ENCODE measurements at regions of chr17 and their contacts with region 1.

Region 1: GRCh38 chr17:76623271-76624146 is 20.0 kb downstream of the ST6GALNAC1 start:
- DNase-seq: peak; percentile 87
- CTCF ChIP-seq: peak; percentile 98

Region 2: DNA sequence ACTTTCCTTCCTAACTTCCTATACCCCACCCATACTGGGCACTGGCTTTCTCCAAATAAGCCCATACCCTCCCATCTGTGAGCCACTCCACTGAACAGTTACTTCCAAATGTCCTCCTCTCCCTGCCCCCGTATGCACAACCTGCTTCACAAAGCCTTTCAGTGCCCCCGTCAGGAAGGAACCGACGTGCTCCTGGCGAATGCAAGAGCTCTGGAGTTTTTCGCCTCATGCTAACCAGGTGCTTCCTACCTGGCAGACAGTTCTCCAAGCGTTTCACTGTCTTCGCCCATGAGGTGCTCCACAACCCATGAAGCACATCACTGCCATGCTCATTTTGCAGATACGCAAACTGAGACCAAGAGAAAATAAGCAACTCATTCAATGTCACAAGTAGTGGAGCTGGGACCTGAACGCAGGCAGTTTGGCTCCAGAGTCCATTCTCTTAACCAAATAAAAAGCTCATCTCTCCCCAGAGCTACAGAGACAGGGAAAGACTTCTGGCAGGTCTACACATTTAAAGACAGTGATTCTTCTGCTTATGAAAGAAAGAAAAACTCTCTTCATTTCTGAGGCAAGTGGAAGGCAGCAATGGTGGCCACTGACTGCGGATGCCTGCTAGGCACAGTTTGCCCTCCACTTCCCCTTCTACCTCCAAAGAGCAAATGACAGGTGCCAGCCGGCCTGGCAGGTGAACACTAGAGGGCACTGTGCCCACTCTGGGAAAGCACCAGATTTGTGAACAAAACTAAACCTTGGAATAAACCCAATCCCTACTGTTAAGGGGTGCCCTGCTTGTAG is 215.3 kb before region 1 on chr17:
- in situ Hi-C with region 1: no loop called
- DNase-seq: peak; percentile 82
- CTCF ChIP-seq: peak; percentile 93

Region 3: GRCh38 chr17:76523084-76524037 is 100.1 kb before region 1 on chr17:
- in situ Hi-C with region 1: loop called (anchors 10 kb)
- DNase-seq: peak; percentile 90
- CTCF ChIP-seq: peak; percentile 98

Region 4: DNA sequence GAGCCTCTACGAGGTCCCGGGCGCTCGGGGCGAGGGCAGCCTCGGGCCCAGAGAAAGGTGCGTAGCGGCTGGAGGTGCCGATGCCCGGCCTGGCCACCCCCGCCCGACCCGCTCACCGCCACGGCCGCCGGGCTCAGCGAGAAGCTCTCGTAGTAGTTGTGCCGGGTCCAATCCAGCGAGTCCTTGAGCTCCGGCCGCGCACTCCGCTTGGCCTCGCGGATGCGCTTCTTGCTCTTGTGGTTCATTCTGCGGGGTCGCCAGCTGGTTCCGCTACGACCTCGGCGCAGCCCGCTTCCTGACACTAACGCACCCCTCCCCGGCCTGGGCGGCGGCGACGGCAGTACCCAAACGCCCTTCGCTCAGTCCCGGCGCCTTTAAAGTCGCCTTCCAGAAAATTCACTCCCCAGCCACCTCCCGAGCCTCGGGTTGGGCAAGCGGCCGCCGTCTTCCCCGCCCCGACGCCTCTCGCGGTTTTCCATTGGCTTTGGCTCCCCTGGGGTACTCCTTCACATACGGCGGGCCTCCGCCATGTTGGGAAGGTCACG is 102.8 kb after region 1 on chr17 and contains the start of gene JMJD6:
- in situ Hi-C with region 1: no loop called
- DNase-seq: peak; percentile 96
- CTCF ChIP-seq: no peak